Heart right ventricle (tissue), 16 donors: ENCODE measurements at regions of chr14 and their contacts with region 1.

Region 1: GRCh38 chr14:72893636-72894321 is at the start of gene DPF3:
- DNase-seq: peak; percentile 96
- ATAC-seq: peak; percentile 93 to 98 (median 96)
- H3K4me3 ChIP-seq: peak within 1 kb of the TSS; percentile 70 to 94 (median 87)
- H3K27ac ChIP-seq: peak within 1 kb of the TSS; percentile 71 to 87 (median 82)
- H3K4me1 ChIP-seq: peaks cover 0 to 46% (median 27%) of the 10 kb centered on the region in 9 donors
- H3K27me3 ChIP-seq: peaks cover 0 to 76% (median 19%) of the 10 kb centered on the region in 7 donors
- CTCF ChIP-seq: no peak
- total RNA-seq, gene DPF3: 23.2 to 52.3 (median 43.5) TPM

Region 2: DNA sequence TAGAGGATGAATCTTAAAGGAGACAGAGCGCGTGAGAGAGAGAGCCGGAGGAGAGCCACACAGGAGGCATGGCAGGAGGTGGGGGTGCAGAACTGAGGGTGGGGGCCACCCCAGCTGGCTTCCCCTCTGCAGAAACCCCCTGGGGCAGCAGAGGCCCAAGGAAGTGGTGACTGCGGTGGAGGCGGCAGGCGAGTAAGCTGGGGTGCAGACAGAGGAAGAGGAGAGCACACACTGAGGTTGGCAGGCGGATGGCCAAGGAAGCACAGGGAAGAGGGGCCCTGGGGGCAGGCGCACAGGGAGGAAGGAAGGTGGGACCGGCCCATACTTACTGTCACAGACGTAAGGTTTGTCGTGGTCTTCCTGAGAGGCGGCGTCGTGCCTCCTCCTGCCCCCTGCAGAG is 179.7 kb before region 1 on chr14:
- intact Hi-C with region 1: loop called in 1 of 10 experiments (anchors 5 kb)
- DNase-seq: no peak
- ATAC-seq: no peak
- H3K4me3 ChIP-seq: peak overlapping the region in 1 of 10 donors; percentile 9
- H3K27ac ChIP-seq: peak overlapping the region in 9 of 10 donors; percentile 68 to 93 (median 71)
- H3K4me1 ChIP-seq: peaks cover 10 to 56% (median 40%) of the 10 kb centered on the region in 9 donors
- H3K27me3 ChIP-seq: no peaks in the 10 kb centered on the region
- CTCF ChIP-seq: no peak

Region 3: GRCh38 chr14:72736314-72736715 is 157.5 kb before region 1 on chr14:
- intact Hi-C with region 1: loop called in 2 of 10 experiments (anchors 5 kb)
- DNase-seq: no peak
- ATAC-seq: peak in 4 of 8 donors; percentile 18 to 56 (median 34)
- H3K4me3 ChIP-seq: no peak overlapping the region
- H3K27ac ChIP-seq: no peak overlapping the region
- H3K4me1 ChIP-seq: peaks cover 0 to 37% (median 3%) of the 10 kb centered on the region in 9 donors
- H3K27me3 ChIP-seq: no peaks in the 10 kb centered on the region
- CTCF ChIP-seq: peak in 3 of 9 donors; percentile 7 to 35 (median 17)

Region 4: DNA sequence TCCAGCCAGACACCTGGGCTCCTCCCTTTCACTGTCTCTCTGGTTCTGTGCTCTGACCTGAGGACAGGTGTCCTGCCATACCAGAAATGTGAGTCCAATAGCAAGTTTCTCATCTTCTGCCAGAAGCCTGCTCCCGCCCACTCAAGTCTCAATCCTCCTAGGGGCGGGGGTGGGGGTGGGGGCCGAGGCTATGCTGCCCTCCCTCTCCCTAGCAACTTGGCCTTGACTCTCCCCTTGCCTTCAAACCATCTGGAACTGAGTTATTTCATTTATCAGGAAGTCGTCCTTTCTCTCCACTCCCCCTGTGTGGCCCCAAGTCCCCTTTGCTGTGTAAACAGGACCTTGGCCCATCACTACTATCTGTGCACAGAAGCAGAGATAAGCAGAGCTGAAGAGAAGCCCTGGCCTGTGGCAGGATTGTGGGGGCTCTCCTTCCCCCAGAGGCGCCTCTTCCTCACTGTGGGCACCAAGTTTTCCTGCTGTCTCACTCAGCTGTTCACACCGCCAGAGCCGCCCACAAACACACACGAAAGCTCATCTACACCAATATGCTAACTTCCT is 117.0 kb before region 1 on chr14:
- intact Hi-C with region 1: no loop called
- DNase-seq: no peak
- ATAC-seq: peak in 3 of 8 donors; percentile 7 to 18 (median 7)
- H3K4me3 ChIP-seq: no peak overlapping the region
- H3K27ac ChIP-seq: no peak overlapping the region
- H3K4me1 ChIP-seq: peaks cover 0 to 70% (median 30%) of the 10 kb centered on the region in 9 donors
- H3K27me3 ChIP-seq: no peaks in the 10 kb centered on the region
- CTCF ChIP-seq: no peak

Region 5: DNA sequence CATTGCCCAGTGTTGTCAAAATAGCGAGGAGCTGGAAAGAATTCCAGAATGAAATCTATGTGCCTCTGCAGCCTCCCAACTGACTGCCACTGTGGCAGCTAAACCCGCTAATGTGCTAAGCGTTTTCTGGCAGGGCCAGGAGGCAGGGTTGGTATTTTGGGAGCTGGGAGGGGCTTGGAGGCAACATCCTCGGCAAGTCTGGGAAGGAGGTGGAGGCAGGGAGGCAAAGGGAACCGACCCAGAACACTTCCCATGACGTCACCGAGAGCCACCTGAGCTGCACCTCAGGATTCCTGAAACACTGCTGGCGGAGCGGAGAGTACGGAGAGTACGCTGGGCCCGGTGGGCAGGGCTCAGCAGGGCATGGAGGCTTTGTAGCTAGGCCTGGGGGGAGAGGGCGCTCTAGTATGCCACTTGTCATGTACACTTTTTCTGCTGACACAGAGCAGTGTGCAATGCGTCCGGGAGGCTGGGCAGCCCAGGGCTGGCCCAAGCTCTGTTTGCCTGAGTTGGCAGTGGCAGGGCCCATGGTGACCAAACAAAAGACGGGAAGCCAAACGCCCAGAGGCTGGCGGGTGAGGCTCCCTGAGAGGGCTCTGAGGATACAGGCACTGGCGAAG is 81.4 kb before region 1 on chr14:
- intact Hi-C with region 1: loop called in 7 of 10 experiments (anchors 2 to 5 kb)
- DNase-seq: peak; percentile 72 to 74
- ATAC-seq: peak; percentile 87 to 96 (median 92)
- H3K4me3 ChIP-seq: peak overlapping the region in 4 of 10 donors; percentile 8 to 28 (median 15)
- H3K27ac ChIP-seq: peak overlapping the region; percentile 72 to 90 (median 85)
- H3K4me1 ChIP-seq: peaks cover 12 to 84% (median 44%) of the 10 kb centered on the region in 9 donors
- H3K27me3 ChIP-seq: no peaks in the 10 kb centered on the region
- CTCF ChIP-seq: peak in 3 of 9 donors; percentile 26 to 38 (median 30)

Region 6: DNA sequence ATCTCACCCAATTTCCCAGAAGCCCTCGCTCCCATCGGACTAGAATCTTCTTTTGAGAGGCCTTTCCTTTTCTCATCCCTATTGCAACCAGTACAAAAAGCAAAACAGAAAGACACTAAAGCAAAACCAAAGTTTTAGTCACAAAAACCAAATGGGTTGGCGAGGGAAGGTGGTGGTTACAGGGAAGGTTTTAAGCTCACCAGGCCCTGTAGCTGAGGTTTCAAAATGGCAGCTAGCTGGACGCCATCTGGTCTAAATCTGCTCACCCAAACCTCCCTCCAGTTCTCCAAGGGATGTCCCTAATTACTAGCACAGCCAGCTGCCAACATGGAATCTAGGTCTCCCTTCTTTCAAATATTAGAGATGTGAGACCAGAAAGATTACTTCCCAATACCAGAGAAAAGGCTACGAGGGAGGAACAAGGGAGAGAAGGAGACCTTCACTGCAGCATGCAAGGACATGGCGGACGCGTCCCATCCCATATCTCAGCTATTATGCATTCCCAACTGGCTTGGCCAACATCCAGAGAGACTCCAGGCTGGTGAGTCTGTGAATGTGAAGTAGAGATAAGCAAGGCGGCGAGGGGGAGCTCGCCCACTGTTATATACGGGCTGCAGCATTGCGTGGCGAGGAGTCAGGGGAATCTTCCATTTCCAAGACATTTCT is 70.7 kb before region 1 on chr14:
- intact Hi-C with region 1: loop called in 1 of 10 experiments (anchors 10 kb)
- DNase-seq: peak; percentile 41 to 78
- ATAC-seq: peak; percentile 73 to 94 (median 86)
- H3K4me3 ChIP-seq: no peak overlapping the region
- H3K27ac ChIP-seq: peak overlapping the region; percentile 1 to 82 (median 73)
- H3K4me1 ChIP-seq: peaks cover 0 to 33% (median 10%) of the 10 kb centered on the region in 9 donors
- H3K27me3 ChIP-seq: no peaks in the 10 kb centered on the region
- CTCF ChIP-seq: no peak

Region 7: GRCh38 chr14:72830786-72831594 is 62.8 kb before region 1 on chr14:
- intact Hi-C with region 1: loop called in 4 of 10 experiments (anchors 5 to 10 kb)
- DNase-seq: peak in 1 of 2 donors; percentile 18
- ATAC-seq: peak in 4 of 8 donors; percentile 6 to 40 (median 22)
- H3K4me3 ChIP-seq: peak overlapping the region in 2 of 10 donors; percentile 3 to 31
- H3K27ac ChIP-seq: peak overlapping the region; percentile 35 to 82 (median 68)
- H3K4me1 ChIP-seq: peaks cover 0 to 39% (median 13%) of the 10 kb centered on the region in 9 donors
- H3K27me3 ChIP-seq: no peaks in the 10 kb centered on the region
- CTCF ChIP-seq: no peak